ENCODE measurements at regions of chr14 and their contacts with region 1.

Region 1: GRCh38 chr14:51852541-51852940 is 7.9 kb upstream of the GNG2 start:
- DNase-seq: no peak
- H3K4me3 ChIP-seq: no peak overlapping the region
- H3K27me3 ChIP-seq: no peaks in the 10 kb centered on the region
- CTCF ChIP-seq: no peak

Region 2: DNA sequence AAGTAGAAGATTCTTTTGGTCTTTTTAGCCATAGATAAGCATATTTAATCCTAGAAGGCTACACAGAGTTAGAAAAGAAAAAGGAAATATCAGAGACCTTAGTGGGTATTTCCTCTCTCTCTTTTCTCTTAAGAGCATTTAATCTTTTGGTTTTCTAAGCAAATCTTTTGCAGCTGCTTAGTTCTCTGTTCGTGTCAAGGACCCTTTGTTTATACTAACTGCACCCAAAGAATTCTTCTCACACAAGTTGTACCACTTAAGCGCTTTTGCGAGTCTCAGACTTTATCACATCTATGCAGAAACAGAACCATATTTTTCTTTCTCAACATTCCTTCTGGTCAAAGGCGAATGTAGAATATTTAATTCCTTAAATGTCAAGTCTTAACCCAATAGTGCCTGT is 234.2 kb after region 1 on chr14:
- CTCF ChIA-PET with region 1: no interaction called
- POLR2A ChIA-PET with region 1: interaction called, 11 read pairs
- DNase-seq: peak; percentile 62
- H3K4me3 ChIP-seq: no peak overlapping the region
- H3K27me3 ChIP-seq: no peaks in the 10 kb centered on the region
- CTCF ChIP-seq: no peak